ENCODE measurements at regions of chr19 and their contacts with region 1.

Region 1: GRCh38 chr19:38061294-38061693 is 154.3 kb downstream of the SIPA1L3 start:
- DNase-seq: no peak
- ATAC-seq: no peak
- H3K4me3 ChIP-seq: no peak overlapping the region
- H3K4me3 Mint-ChIP-seq: no peak overlapping the region
- H3K27ac ChIP-seq: no peak overlapping the region
- H3K27ac Mint-ChIP-seq: no peak overlapping the region
- H3K4me1 ChIP-seq: peaks cover 8% of the 10 kb centered on the region
- H3K4me1 Mint-ChIP-seq: peaks cover 11% of the 10 kb centered on the region
- H3K27me3 ChIP-seq: no peaks in the 10 kb centered on the region
- H3K27me3 Mint-ChIP-seq: no peaks in the 10 kb centered on the region
- CTCF ChIP-seq: no peak

Region 2: GRCh38 chr19:38049105-38049649 is 12.1 kb before region 1 on chr19:
- CTCF ChIA-PET with region 1: no interaction called
- POLR2A ChIA-PET with region 1: interaction called, 23 read pairs
- intact Hi-C with region 1: no loop called
- DNase-seq: peak; percentile 27 to 90 (median 44)
- ATAC-seq: peak; percentile 88
- H3K4me3 ChIP-seq: peak overlapping the region; percentile 49
- H3K4me3 Mint-ChIP-seq: peak overlapping the region; percentile 65
- H3K27ac ChIP-seq: peak overlapping the region; percentile 78 to 83
- H3K27ac Mint-ChIP-seq: peak overlapping the region; percentile 98
- H3K4me1 ChIP-seq: peaks cover 42% of the 10 kb centered on the region
- H3K4me1 Mint-ChIP-seq: peaks cover 39% of the 10 kb centered on the region
- H3K27me3 ChIP-seq: no peaks in the 10 kb centered on the region
- H3K27me3 Mint-ChIP-seq: no peaks in the 10 kb centered on the region
- CTCF ChIP-seq: no peak

Measured in CD4-positive, alpha-beta T cell (primary cell).